Activated T-helper 2 cell treated with anti-CD3 and anti-CD28 coated beads, Interferon-gamma antibody, Interleukin-2, Interleukin-4, amounts not matched to agents 10 μg/mL and 5 μg/mL and 100 μg/mL, durations not matched to agents 14 hours and 24 hours and 36 hours (primary cell): ENCODE measurements at regions of chr1 and their contacts with region 1.

Region 1: DNA sequence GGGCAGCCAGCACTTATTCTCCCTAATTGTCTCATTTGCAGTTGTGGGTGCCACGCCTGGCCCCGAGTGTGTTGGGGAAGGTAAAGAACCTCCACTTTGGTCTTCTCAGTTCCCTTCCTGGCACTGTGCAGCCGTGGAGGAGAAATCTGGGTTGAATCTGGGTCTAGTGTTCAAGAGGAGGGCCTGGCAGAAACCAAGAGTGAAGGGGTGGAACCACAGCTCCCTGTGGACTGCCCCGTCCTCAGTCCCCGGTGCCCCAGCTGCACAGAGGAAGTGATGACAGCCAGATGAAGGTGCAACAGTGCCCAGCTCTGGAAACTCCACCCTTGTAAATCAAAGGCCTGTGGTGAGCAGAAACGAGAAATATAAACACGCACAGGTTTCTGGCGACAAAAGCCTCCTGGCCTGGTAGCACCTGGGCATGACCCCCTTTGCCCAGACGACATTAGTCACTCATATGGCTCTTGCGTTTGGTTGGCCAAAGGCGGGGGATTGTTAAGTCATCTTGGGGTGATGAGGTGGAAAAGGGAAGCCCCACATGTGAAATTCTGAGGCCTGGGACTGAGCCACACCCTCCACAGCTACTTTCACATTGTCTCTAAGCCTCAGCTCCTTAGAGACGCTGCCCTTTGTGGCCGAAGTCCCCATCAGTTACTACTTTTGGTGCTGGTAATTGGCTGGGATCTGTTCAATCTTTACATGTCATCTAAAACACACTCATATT is 4.2 kb upstream of the ECE1 start:
- DNase-seq: peak; percentile 82
- H3K4me3 Mint-ChIP-seq: peak overlapping the region; percentile 63
- H3K27ac Mint-ChIP-seq: peak overlapping the region; percentile 91
- H3K4me1 Mint-ChIP-seq: peaks cover 72% of the 10 kb centered on the region
- H3K27me3 Mint-ChIP-seq: no peaks in the 10 kb centered on the region

Region 2: GRCh38 chr1:20932437-20932977 is 361.9 kb before region 1 on chr1:
- intact Hi-C with region 1: loop called (anchors 1 kb)
- DNase-seq: no peak
- H3K4me3 Mint-ChIP-seq: peak overlapping the region; percentile 56
- H3K27ac Mint-ChIP-seq: peak overlapping the region; percentile 84
- H3K4me1 Mint-ChIP-seq: peaks cover 35% of the 10 kb centered on the region
- H3K27me3 Mint-ChIP-seq: no peaks in the 10 kb centered on the region

Region 3: GRCh38 chr1:21255278-21255942 is 39.0 kb before region 1 on chr1:
- intact Hi-C with region 1: loop called (anchors 2 kb)
- DNase-seq: peak; percentile 64
- H3K4me3 Mint-ChIP-seq: no peak overlapping the region
- H3K27ac Mint-ChIP-seq: peak overlapping the region; percentile 71
- H3K4me1 Mint-ChIP-seq: peaks cover 37% of the 10 kb centered on the region
- H3K27me3 Mint-ChIP-seq: no peaks in the 10 kb centered on the region

Region 4: GRCh38 chr1:21324368-21325141 is 30.1 kb after region 1 on chr1:
- intact Hi-C with region 1: loop called (anchors 1 kb)
- DNase-seq: no peak
- H3K4me3 Mint-ChIP-seq: peak overlapping the region; percentile 60
- H3K27ac Mint-ChIP-seq: peak overlapping the region; percentile 93
- H3K4me1 Mint-ChIP-seq: peaks cover 63% of the 10 kb centered on the region
- H3K27me3 Mint-ChIP-seq: no peaks in the 10 kb centered on the region

Region 5: GRCh38 chr1:21344750-21345443 is 50.5 kb after region 1 on chr1:
- intact Hi-C with region 1: loop called (anchors 1 kb)
- DNase-seq: no peak
- H3K4me3 Mint-ChIP-seq: peak overlapping the region; percentile 83
- H3K27ac Mint-ChIP-seq: peak overlapping the region; percentile 51
- H3K4me1 Mint-ChIP-seq: peaks cover 30% of the 10 kb centered on the region
- H3K27me3 Mint-ChIP-seq: peaks cover under 1% of the 10 kb centered on the region

Region 6: DNA sequence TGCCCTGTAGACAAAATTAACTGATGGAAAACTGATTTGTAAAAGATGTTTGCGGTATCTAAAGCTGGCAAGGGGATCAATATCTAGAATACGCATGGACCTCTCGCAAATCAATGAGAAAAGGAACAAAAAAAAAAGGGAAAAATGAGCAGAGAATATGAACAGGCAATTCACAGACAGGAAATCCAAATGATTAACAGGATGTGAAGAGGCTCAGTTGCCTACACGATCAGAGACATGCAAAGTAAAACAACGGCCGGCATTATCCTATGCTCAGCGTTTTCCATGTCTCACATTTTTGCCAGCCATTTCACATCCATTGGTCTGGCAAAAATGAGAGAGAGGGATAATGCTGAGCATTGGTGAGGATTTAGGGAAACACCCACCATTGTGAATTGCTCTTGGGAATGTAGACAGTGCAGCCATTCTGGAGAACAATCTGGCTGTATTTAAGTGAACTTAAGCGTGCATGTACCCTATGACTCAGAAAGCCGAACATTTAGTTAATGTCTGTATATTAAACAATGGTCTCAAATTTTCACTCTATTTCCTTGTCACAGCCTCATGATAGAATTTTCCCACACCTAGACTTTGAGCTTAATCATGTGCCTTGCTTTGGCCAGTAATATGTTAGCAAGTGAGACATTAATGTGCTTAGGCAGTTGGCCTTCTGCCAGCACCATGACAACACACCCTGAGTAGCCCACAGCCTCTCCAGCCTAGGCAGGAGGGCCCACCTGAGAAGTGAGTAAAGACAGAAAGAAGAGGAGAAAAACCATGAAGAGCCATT is 84.5 kb after region 1 on chr1:
- intact Hi-C with region 1: no loop called
- DNase-seq: no peak
- H3K4me3 Mint-ChIP-seq: no peak overlapping the region
- H3K27ac Mint-ChIP-seq: no peak overlapping the region
- H3K4me1 Mint-ChIP-seq: peaks cover 7% of the 10 kb centered on the region
- H3K27me3 Mint-ChIP-seq: peaks cover 8% of the 10 kb centered on the region

Region 7: GRCh38 chr1:21631944-21632887 is 337.8 kb after region 1 on chr1:
- intact Hi-C with region 1: no loop called
- DNase-seq: no peak
- H3K4me3 Mint-ChIP-seq: no peak overlapping the region
- H3K27ac Mint-ChIP-seq: no peak overlapping the region
- H3K4me1 Mint-ChIP-seq: no peaks in the 10 kb centered on the region
- H3K27me3 Mint-ChIP-seq: no peaks in the 10 kb centered on the region